Activated CD4-positive, alpha-beta memory T cell treated with anti-CD3 and anti-CD28 coated beads, Interleukin-2, amount 10 ng/mL, durations not matched to agents 7 days and 5 days (primary cell): ENCODE measurements at regions of chr9 and their contacts with region 1.

Region 1: GRCh38 chr9:32571969-32572899 is 725 bp downstream of the NDUFB6 start:
- DNase-seq: peak; percentile 81
- H3K4me3 Mint-ChIP-seq: peak overlapping the region; percentile 97
- H3K27ac Mint-ChIP-seq: peak overlapping the region; percentile 96
- H3K4me1 Mint-ChIP-seq: peaks cover 28% of the 10 kb centered on the region
- H3K27me3 Mint-ChIP-seq: peaks cover 1% of the 10 kb centered on the region

Region 2: GRCh38 chr9:32384364-32385151 is 187.7 kb before region 1 on chr9 and contains the start of gene ACO1:
- CTCF ChIA-PET with region 1: interaction called, 416 read pairs
- POLR2A ChIA-PET with region 1: interaction called, 31 read pairs
- DNase-seq: peak; percentile 87
- H3K4me3 Mint-ChIP-seq: peak within 1 kb of the TSS; percentile 75
- H3K27ac Mint-ChIP-seq: no peak within 1 kb of the TSS
- H3K4me1 Mint-ChIP-seq: peaks cover 8% of the 10 kb centered on the region
- H3K27me3 Mint-ChIP-seq: peaks cover 35% of the 10 kb centered on the region
- total RNA-seq, gene ACO1: 6.4 to 6.6 TPM

Region 3: DNA sequence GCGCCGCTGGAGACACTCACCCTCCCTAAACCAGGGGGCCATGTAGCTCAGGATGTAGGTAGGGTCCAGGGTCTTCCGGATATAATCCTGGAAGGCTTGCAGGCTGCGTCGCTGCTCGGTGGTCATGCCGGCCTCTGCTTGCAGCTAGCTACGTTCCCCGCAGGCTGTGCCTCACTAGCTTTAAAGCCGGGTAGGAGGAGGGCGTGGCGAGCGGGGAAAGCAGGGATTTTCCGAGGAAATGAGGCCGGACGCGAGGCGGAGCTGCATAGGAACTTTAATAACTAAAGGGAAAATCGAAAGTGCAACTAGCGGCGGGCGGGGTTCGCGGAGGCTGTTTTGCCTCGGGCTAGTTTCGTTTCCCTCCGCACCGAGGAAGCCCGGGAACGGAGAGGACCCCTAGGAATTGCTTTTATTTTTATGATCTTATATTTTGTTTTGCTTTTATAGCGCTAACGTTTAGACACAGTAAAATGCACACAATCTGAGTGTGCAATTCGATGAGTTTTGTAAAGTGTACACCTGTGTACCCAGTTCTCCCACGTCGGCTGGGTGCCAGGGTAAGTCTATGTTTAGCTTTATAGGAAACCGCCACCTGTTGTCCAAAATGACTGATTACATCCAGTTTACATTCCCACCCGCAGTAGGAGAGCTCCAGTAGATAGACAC is 46.1 kb before region 1 on chr9 and contains the start of gene RIGI:
- CTCF ChIA-PET with region 1: interaction called, 35 read pairs
- POLR2A ChIA-PET with region 1: interaction called, 16 read pairs
- DNase-seq: peak; percentile 83
- H3K4me3 Mint-ChIP-seq: peak within 1 kb of the TSS; percentile 96
- H3K27ac Mint-ChIP-seq: peak within 1 kb of the TSS; percentile 88
- H3K4me1 Mint-ChIP-seq: peaks cover 60% of the 10 kb centered on the region
- H3K27me3 Mint-ChIP-seq: no peaks in the 10 kb centered on the region
- total RNA-seq, gene RIGI: 32.4 to 33.7 TPM

Region 4: GRCh38 chr9:32558408-32558934 is 13.8 kb before region 1 on chr9:
- CTCF ChIA-PET with region 1: interaction called, 56 read pairs
- POLR2A ChIA-PET with region 1: interaction called, 36 read pairs
- DNase-seq: no peak
- H3K4me3 Mint-ChIP-seq: no peak overlapping the region
- H3K27ac Mint-ChIP-seq: no peak overlapping the region
- H3K4me1 Mint-ChIP-seq: peaks cover 17% of the 10 kb centered on the region
- H3K27me3 Mint-ChIP-seq: no peaks in the 10 kb centered on the region